ENCODE measurements at regions of chr11 and their contacts with region 1.

Region 1: GRCh38 chr11:3920148-3920852 is 64.8 kb downstream of the STIM1 start:
- DNase-seq: peak; percentile 57 to 76
- ATAC-seq: peak; percentile 78 to 79 (median 78)
- H3K4me3 ChIP-seq: no peak overlapping the region
- H3K4me3 Mint-ChIP-seq: peak overlapping the region; percentile 36
- H3K27ac ChIP-seq: peak overlapping the region; percentile 65
- H3K27ac Mint-ChIP-seq: peak overlapping the region; percentile 61 to 81
- H3K4me1 ChIP-seq: peaks cover 47% of the 10 kb centered on the region
- H3K4me1 Mint-ChIP-seq: peaks cover 57% of the 10 kb centered on the region in 2 donors
- H3K27me3 ChIP-seq: no peaks in the 10 kb centered on the region
- H3K27me3 Mint-ChIP-seq: no peaks in the 10 kb centered on the region
- CTCF ChIP-seq: no peak

Region 2: DNA sequence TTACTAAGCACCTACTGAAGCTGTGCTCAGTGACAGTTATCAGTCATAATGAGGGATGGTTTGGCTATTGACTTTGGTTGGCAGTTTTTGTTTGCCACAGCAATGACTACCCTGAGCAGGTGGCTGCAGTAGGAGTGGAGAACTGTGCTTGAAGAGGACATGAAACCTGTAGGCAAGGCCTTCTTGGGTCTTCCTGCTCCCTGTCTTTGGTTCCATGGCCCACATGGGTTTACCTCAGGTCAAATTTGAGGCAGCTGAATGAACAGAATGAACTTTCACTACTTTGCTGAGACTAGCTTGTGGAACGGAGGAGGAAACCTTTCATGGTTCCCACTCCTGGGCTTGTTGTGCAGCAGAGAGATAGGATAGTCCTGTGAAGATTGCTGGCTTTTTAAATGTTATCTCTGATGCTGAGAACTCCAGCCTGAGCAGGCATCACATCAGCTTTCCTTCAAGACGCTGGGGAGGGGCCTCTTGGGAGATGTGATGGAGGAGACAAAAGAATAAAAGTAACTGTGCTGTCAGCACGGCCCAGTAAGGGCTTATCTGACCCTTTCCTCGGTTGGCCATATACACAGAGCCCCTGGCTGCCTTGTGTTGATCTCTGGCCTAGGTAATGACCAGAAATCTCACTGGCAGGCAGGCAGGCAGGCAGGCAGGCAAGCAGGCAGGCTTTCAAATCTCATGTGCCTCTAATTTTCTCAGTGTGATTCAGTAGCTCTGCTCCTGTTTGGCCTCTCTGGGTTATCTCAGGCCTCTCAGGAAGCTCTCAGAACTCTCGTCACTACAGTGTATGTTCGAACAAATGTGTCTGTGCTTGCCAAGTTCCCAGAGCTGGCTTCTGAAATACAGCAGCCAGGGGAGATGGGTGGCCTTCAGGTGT is 52.9 kb before region 1 on chr11:
- intact Hi-C with region 1: loop called (anchors 5 kb)
- DNase-seq: peak in 1 of 2 donors; percentile 34
- ATAC-seq: no peak
- H3K4me3 ChIP-seq: no peak overlapping the region
- H3K4me3 Mint-ChIP-seq: peak overlapping the region; percentile 41
- H3K27ac ChIP-seq: peak overlapping the region; percentile 70
- H3K27ac Mint-ChIP-seq: peak overlapping the region; percentile 83 to 88
- H3K4me1 ChIP-seq: peaks cover 55% of the 10 kb centered on the region
- H3K4me1 Mint-ChIP-seq: peaks cover 79 to 82% of the 10 kb centered on the region in 2 donors
- H3K27me3 ChIP-seq: no peaks in the 10 kb centered on the region
- H3K27me3 Mint-ChIP-seq: no peaks in the 10 kb centered on the region
- CTCF ChIP-seq: no peak

Region 3: DNA sequence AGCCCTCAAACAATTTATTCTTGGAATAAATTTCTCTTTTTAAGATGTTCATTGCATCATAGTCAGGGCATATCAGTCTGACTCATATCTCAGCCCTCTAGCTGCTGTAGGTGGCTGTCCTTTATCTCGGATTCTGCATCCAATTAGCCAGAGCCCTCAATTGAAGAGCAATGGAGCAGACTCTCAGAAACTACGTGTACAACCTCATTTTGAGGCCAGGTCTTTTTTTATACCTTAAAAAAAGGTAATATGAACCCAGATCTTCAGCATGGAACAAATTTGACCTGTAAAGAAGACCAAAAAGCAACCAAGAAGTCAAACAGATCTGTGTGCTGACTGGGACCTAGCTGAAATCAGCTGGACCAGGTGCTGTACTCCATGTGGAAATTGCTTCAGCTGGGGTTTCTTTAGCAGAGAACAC is 1209.2 kb after region 1 on chr11:
- intact Hi-C with region 1: no loop called
- DNase-seq: no peak
- ATAC-seq: no peak
- H3K4me3 ChIP-seq: no peak overlapping the region
- H3K4me3 Mint-ChIP-seq: no peak overlapping the region
- H3K27ac ChIP-seq: no peak overlapping the region
- H3K27ac Mint-ChIP-seq: no peak overlapping the region
- H3K4me1 ChIP-seq: no peaks in the 10 kb centered on the region
- H3K4me1 Mint-ChIP-seq: no peaks in the 10 kb centered on the region
- H3K27me3 ChIP-seq: no peaks in the 10 kb centered on the region
- H3K27me3 Mint-ChIP-seq: peaks cover 0 to 6% of the 10 kb centered on the region in 2 donors
- CTCF ChIP-seq: no peak